ENCODE measurements at regions of chr1 and their contacts with region 1.

Region 1: DNA sequence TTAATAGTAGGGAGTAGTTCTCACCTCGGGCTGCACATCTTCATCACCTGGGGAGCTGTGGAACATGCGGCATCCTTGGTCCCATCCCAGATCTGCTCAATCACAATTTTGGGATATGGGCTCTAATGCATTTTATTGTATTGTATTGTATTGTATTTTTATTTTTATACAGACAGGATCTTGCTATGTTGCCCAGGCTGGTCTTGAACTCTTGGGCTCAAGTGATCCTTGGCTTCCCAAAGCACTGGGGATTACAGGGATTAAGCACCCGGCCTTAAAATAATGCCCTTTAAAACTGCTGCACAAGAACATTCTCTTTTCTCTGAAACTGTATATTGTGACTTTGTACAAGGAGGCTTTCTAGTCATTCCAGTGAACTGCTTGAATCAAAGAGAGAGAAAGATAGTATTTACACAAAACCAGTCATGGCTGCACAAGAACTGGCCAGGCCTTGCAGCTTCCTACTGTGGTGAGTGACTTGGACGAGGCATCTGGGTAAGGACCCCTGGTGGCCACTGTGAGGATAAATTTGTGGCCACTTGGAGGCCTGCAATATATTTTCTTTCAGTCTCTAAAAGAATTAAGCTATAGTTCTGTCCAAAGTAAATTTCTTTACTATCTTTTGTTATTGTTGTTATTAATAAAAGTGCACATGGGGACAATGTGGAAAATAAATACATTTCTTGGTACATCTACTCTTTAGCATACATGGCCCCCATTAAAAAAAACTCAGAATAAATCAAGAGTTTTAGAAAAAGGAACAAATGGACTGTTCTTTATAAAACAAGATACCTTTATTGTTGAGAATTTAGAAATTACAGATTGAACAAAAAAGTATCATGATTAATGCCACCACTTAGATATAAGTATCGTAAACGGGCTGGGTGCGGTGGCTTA is 48.0 kb downstream of the TBCE start:
- DNase-seq: peak in 1 of 2 donors; percentile 71
- H3K4me3 ChIP-seq: no peak overlapping the region
- H3K27ac ChIP-seq: no peak overlapping the region
- H3K4me1 ChIP-seq: peaks cover 2 to 4% of the 10 kb centered on the region in 2 donors
- H3K27me3 ChIP-seq: no peaks in the 10 kb centered on the region
- CTCF ChIP-seq: peak; percentile 46 to 59 (median 54)

Region 2: GRCh38 chr1:234486498-234487448 is 928.5 kb before region 1 on chr1:
- intact Hi-C with region 1: loop called (anchors 10 kb)
- DNase-seq: no peak
- H3K4me3 ChIP-seq: peak overlapping the region; percentile 10 to 37
- H3K27ac ChIP-seq: no peak overlapping the region
- H3K4me1 ChIP-seq: no peaks in the 10 kb centered on the region
- H3K27me3 ChIP-seq: no peaks in the 10 kb centered on the region
- CTCF ChIP-seq: peak; percentile 61 to 79 (median 64)

Region 3: GRCh38 chr1:235105051-235106043 is 309.9 kb before region 1 on chr1:
- intact Hi-C with region 1: loop called (anchors 5 kb)
- DNase-seq: no peak
- H3K4me3 ChIP-seq: no peak overlapping the region
- H3K27ac ChIP-seq: no peak overlapping the region
- H3K4me1 ChIP-seq: peaks cover 0 to 2% of the 10 kb centered on the region in 2 donors
- H3K27me3 ChIP-seq: no peaks in the 10 kb centered on the region
- CTCF ChIP-seq: no peak

Region 4: DNA sequence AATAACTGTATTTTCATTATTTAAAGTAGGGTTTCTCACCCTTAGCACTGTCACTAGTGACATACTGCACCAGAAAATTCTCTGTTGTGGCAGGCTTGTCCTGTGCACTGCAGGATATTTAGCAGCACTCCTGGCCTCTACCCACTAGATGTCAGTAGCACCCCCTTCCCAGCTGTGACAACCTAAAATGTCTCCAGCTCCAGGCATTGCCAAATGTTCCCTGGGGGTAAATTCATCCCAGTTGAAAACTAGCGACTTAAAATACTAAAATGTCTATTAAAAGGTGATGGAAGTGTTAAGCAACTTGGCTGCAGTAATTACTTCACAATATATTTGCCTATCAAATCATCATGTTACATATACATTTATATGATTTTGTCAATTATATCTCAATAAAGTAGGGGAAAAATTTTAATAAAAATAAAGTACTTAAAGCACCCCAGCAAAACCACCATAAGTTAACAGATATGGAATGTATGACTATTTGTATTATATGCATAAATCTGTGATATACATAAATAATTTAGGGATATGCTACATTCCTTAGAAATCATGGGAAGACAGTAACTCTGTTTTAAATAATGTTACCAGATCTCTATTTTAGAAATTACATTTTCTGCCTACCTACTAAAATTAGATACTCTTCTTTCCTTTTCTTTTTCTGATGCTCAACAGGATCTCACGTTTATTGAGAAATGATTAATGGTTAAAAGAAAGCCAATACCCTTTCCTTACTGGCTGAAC is 161.9 kb before region 1 on chr1:
- intact Hi-C with region 1: loop called (anchors 2 kb)
- DNase-seq: peak in 1 of 2 donors; percentile 77
- H3K4me3 ChIP-seq: no peak overlapping the region
- H3K27ac ChIP-seq: no peak overlapping the region
- H3K4me1 ChIP-seq: no peaks in the 10 kb centered on the region
- H3K27me3 ChIP-seq: no peaks in the 10 kb centered on the region
- CTCF ChIP-seq: peak; percentile 53 to 87 (median 73)

Region 5: DNA sequence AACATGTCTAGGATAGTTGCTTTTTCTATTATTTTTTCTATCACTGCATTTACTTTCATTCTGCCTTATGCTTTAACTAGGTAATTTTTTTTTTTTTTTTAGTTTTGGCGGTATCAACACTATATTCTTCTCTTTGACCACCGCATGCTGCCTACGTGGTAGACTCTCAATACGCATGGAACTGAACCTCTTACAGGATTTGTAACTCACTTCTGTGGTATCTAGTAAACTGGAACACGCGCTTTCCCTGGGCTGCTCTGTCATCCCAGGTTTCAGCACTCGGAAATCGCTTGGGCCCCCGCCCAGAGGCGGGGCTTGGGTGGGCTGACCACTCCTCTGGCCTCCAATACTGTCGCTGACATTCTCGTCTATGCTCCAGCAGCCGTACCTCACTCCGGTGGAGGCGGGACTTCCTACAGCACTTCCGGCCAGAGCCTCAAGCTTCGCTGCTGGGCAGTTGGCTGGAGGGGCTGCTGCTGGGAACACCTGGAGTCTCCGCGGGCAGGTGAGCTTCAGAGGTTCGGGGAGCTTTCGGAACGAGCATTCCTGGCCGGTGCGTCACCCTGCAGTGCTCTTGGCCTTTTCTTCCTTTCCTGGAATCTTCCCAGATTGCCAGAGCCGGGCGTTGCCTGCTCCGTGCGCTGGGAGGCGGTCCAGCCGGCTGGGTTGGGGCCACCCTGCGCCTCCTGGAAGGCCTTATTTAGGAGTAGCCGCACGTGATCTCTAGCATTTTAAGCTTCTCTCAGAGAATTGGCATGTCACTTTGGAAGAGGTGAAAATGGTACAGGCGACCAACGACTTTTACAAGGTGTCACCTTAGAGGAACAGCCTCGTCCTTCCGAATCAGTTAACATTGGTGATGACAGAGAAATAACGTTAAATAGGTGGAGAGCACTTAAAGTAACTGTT is 48.0 kb before region 1 on chr1 and contains the start of gene TBCE:
- intact Hi-C with region 1: loop called (anchors 2 kb)
- DNase-seq: peak; percentile 86 to 99
- H3K4me3 ChIP-seq: peak within 1 kb of the TSS; percentile 68 to 77
- H3K27ac ChIP-seq: peak within 1 kb of the TSS; percentile 68 to 70
- H3K4me1 ChIP-seq: peaks cover 0 to 5% of the 10 kb centered on the region in 2 donors
- H3K27me3 ChIP-seq: no peaks in the 10 kb centered on the region
- CTCF ChIP-seq: peak in 1 of 3 experiments; percentile 16
- total RNA-seq, gene TBCE: 67.8 TPM

Measured in ascending aorta (tissue), 2 donors.